Naive thymus-derived CD4-positive, alpha-beta T cell (primary cell): ENCODE measurements at regions of chr3 and their contacts with region 1.

Region 1: DNA sequence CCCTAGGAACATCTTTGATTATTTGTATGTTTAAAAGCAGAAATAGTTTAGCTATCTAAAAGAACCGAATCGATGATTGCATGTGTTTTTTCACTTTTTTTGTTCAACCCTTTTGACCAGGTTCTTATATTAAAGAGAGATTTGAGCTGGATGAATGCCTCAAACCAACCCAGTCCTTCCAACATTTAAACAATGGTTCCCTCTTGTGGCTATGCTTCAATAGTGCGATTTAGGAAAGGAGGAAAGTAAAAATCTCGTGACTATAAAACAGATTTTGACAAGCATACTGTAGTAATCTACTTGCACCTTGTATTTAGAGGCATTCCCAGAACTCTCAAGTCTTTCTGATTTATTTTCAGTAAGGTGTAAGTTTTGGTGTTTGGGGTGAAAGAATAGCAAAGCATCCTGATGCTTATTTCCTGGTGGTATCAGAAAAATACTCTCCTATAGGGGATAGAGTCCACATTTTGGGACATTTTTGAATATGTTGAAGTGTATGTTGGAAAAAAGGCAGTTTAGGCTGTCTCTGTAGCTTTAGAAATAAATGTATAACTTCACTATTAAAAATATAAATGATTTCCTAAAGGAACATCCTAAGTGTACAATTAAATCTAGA is 159.6 kb upstream of the KCNH8 start:
- DNase-seq: peak in 7 of 9 donors; percentile 32 to 69 (median 51)
- ATAC-seq: peak; percentile 72
- H3K4me3 ChIP-seq: no peak overlapping the region
- H3K4me3 Mint-ChIP-seq: peak overlapping the region in 9 of 10 donors; percentile 65 to 91 (median 77)
- H3K27ac ChIP-seq: no peak overlapping the region
- H3K27ac Mint-ChIP-seq: peak overlapping the region in 6 of 9 donors; percentile 21 to 71 (median 50)
- H3K4me1 ChIP-seq: peaks cover 0 to 7% of the 10 kb centered on the region in 2 donors
- H3K4me1 Mint-ChIP-seq: peaks cover 2 to 31% (median 24%) of the 10 kb centered on the region in 7 donors
- H3K27me3 ChIP-seq: no peaks in the 10 kb centered on the region
- H3K27me3 Mint-ChIP-seq: peaks cover 20 to 31% (median 22%) of the 10 kb centered on the region in 5 donors

Region 2: DNA sequence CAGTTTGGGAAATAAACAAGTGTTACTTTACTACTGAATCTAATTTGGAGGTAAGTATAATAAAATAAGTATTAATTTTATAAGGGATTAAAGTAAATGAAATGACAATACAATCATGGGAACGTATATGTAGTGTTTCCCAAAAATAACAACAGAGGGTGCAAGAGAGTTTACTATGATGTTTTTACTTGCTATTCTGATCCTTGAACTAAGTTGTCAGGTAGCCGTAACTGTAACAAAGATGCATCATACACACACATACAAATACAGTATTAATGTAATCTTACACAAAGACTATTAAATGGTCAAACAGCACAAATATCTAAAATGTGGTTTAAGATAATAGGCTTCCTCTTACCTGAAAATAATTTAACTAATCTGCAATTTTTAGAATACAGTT is 1557.7 kb before region 1 on chr3:
- CTCF ChIA-PET with region 1: interaction called, 4 read pairs
- POLR2A ChIA-PET with region 1: no interaction called
- intact Hi-C with region 1: loop called (anchors 2 kb)
- DNase-seq: peak in 3 of 9 donors; percentile 3 to 12 (median 7)
- ATAC-seq: no peak
- H3K4me3 ChIP-seq: no peak overlapping the region
- H3K4me3 Mint-ChIP-seq: no peak overlapping the region
- H3K27ac ChIP-seq: no peak overlapping the region
- H3K27ac Mint-ChIP-seq: no peak overlapping the region
- H3K4me1 ChIP-seq: no peaks in the 10 kb centered on the region
- H3K4me1 Mint-ChIP-seq: peaks cover 0 to 3% (median 0%) of the 10 kb centered on the region in 7 donors
- H3K27me3 ChIP-seq: no peaks in the 10 kb centered on the region
- H3K27me3 Mint-ChIP-seq: no peaks in the 10 kb centered on the region

Region 3: DNA sequence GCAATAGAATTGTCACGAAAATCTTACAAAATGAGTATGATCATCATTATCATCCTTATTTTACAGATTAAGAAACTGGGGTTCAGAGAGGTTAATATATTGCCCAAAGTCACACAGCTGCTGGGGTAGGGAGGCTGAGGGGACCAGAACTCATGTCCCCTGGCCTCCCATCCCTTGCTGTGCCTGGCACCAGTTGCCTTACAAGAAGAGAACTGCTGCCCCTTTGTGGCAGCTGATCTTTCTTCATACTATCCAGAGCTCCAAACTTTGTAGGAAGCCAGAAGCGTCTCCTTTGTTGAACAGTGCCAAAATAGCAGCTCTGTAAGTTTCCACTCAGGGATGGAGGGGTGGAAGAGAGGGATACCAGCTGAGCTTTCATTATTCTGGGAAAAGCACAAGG is 1009.5 kb before region 1 on chr3:
- CTCF ChIA-PET with region 1: no interaction called
- POLR2A ChIA-PET with region 1: no interaction called
- intact Hi-C with region 1: loop called in 1 of 2 experiments (anchors 10 kb)
- DNase-seq: no peak
- ATAC-seq: no peak
- H3K4me3 ChIP-seq: no peak overlapping the region
- H3K4me3 Mint-ChIP-seq: no peak overlapping the region
- H3K27ac ChIP-seq: no peak overlapping the region
- H3K27ac Mint-ChIP-seq: no peak overlapping the region
- H3K4me1 ChIP-seq: no peaks in the 10 kb centered on the region
- H3K4me1 Mint-ChIP-seq: no peaks in the 10 kb centered on the region
- H3K27me3 ChIP-seq: no peaks in the 10 kb centered on the region
- H3K27me3 Mint-ChIP-seq: peaks cover 0 to 26% (median 13%) of the 10 kb centered on the region in 5 donors

Region 4: DNA sequence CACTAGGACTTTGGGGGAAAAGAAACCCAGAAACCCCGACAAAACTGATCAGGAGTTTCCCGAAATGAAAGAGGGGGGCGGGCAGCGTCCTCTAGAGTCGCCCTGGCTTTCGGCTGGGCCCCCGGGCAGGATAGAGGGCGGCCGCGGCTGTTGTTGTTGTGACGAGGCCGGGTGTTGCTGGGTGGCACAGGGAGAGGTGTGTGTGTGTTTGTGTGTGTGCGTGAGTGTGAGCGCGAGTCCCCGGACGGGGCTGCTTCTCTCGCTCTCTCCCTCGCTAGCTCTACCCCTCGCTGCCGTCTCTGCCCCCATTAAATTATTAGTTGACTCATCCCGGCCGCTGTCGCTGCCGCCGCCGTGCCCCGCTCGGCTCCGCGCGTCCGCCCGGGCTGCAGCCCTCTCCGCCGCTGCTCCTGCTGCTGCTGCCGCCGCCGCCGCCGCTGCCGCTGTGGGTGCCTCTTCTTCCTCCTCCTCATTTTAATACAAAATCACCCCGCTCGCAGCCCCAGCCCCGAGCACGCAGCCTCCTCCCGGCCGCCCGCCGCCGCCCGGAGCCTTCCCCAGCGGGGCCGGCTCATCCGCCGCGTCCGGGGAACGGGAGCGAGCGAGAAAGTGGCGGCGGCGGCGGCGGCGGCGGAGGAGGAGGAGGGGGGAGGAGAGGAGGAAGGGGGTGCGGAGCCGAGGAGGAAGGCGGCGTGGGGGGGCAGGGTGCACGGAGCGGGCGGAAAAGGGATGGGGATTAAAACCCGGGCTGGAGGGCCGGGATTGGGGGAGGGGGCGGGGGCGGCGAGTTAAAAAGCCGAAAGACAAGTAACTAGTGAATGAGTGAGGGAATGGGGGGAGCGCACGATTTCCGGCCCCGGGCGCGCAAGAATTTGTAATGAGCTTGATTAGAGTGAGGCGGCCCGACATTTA is 563.7 kb before region 1 on chr3 and contains the start of gene SATB1:
- CTCF ChIA-PET with region 1: interaction called, 6 read pairs
- POLR2A ChIA-PET with region 1: no interaction called
- intact Hi-C with region 1: loop called in 1 of 2 experiments (anchors 5 kb)
- DNase-seq: peak; percentile 55 to 72 (median 67)
- ATAC-seq: peak; percentile 62
- H3K4me3 ChIP-seq: peak within 1 kb of the TSS; percentile 72
- H3K4me3 Mint-ChIP-seq: peak within 1 kb of the TSS; percentile 91 to 100 (median 98)
- H3K27ac ChIP-seq: peak within 1 kb of the TSS; percentile 97
- H3K27ac Mint-ChIP-seq: peak within 1 kb of the TSS; percentile 87 to 99 (median 98)
- H3K4me1 ChIP-seq: peaks cover 8 to 21% of the 10 kb centered on the region in 2 donors
- H3K4me1 Mint-ChIP-seq: peaks cover 41 to 72% (median 62%) of the 10 kb centered on the region in 7 donors
- H3K27me3 ChIP-seq: no peaks in the 10 kb centered on the region
- H3K27me3 Mint-ChIP-seq: peaks cover 0 to 2% (median 0%) of the 10 kb centered on the region in 5 donors
- total RNA-seq, gene SATB1: 258 to 482 (median 451) TPM

Region 5: DNA sequence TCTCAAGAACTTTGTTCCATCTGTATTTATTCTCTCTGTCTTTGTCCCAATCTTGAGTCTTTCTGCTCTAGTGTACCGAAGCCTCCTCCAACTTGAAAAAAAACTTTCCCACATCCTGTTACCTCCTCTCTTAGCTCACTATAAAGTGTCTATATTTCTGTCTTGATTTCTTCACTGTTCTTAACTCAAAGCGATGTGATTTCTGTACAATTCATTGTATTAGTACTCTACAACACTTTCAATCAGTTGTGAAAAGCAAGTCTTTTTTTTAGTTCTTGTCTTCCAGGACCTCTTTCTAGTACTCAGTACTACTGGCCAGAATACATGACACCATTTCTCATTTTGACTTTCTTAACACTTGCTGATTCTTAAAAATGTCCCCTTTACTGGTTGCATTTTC is 210.1 kb before region 1 on chr3:
- CTCF ChIA-PET with region 1: no interaction called
- POLR2A ChIA-PET with region 1: no interaction called
- intact Hi-C with region 1: loop called in 1 of 2 experiments (anchors 5 kb)
- DNase-seq: peak in 6 of 9 donors; percentile 39 to 65 (median 56)
- ATAC-seq: peak; percentile 73
- H3K4me3 ChIP-seq: peak overlapping the region; percentile 18
- H3K4me3 Mint-ChIP-seq: peak overlapping the region; percentile 2 to 77 (median 71)
- H3K27ac ChIP-seq: peak overlapping the region; percentile 39
- H3K27ac Mint-ChIP-seq: peak overlapping the region; percentile 56 to 86 (median 73)
- H3K4me1 ChIP-seq: peaks cover 5 to 32% of the 10 kb centered on the region in 2 donors
- H3K4me1 Mint-ChIP-seq: peaks cover 18 to 84% (median 67%) of the 10 kb centered on the region in 7 donors
- H3K27me3 ChIP-seq: no peaks in the 10 kb centered on the region
- H3K27me3 Mint-ChIP-seq: no peaks in the 10 kb centered on the region

Region 6: DNA sequence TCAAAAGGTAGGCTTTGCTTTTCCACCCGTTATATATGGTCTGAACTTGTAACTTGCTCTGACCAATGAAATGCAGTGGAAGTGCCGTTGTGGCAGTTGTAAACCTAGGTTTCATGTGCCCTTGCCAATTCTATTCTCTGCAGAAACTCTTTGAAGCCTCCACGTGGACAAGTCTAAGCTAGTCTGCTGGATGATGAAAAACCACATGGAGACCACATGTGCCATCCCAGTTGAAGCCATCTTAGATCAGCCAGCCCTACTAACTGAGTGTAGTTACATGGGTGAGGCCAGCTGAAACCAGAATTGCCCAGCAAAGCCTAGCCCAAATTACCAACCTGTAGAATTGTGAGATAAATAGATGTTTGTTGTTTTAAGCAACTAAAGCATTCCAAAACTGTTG is 24.1 kb before region 1 on chr3:
- CTCF ChIA-PET with region 1: no interaction called
- POLR2A ChIA-PET with region 1: no interaction called
- intact Hi-C with region 1: no loop called
- DNase-seq: no peak
- ATAC-seq: no peak
- H3K4me3 ChIP-seq: no peak overlapping the region
- H3K4me3 Mint-ChIP-seq: no peak overlapping the region
- H3K27ac ChIP-seq: no peak overlapping the region
- H3K27ac Mint-ChIP-seq: no peak overlapping the region
- H3K4me1 ChIP-seq: no peaks in the 10 kb centered on the region
- H3K4me1 Mint-ChIP-seq: no peaks in the 10 kb centered on the region
- H3K27me3 ChIP-seq: no peaks in the 10 kb centered on the region
- H3K27me3 Mint-ChIP-seq: peaks cover 0 to 6% (median 4%) of the 10 kb centered on the region in 5 donors

Region 7: DNA sequence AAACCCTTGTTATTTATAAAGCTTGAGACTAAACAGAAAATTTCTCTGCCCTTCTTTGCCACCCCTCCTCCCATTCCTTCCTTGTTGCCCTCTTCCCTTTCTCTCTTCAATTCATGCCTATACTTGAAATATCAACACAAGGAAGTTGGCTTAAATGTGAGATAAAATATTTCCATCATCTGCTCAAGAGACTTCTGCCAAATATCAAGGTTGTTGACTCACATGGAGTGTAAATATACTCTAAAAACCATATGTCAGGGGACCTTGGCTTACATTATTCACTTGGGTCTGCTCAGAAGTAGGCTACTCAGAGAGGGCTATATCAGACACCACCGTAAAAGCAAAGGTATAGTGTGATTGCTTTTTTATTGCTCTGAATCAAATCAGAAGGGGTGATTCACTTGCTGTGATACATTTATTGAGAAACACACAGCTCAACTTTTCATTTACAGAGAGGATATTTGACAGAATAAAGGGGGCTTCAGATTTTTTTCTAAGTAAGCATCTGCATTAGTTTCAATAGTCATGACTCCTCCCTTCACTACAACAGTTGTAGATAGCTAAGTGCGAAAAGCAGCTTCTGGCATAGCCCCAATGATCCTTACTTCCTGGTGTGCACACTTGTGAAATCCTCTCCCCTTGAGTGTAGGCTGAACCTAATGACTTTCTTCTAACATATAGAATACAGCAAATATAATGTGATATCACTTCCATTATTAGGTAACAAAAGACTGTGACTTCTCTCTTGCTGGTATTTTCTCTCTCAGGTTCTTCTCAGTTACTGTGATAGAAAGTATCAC is 559.1 kb after region 1 on chr3:
- CTCF ChIA-PET with region 1: no interaction called
- POLR2A ChIA-PET with region 1: no interaction called
- intact Hi-C with region 1: no loop called
- DNase-seq: no peak
- ATAC-seq: no peak
- H3K4me3 ChIP-seq: no peak overlapping the region
- H3K4me3 Mint-ChIP-seq: no peak overlapping the region
- H3K27ac ChIP-seq: no peak overlapping the region
- H3K27ac Mint-ChIP-seq: no peak overlapping the region
- H3K4me1 ChIP-seq: no peaks in the 10 kb centered on the region
- H3K4me1 Mint-ChIP-seq: peaks cover 0 to 2% (median 0%) of the 10 kb centered on the region in 7 donors
- H3K27me3 ChIP-seq: no peaks in the 10 kb centered on the region
- H3K27me3 Mint-ChIP-seq: no peaks in the 10 kb centered on the region